ENCODE measurements at regions of chr19 and their contacts with region 1.

Region 1: GRCh38 chr19:38095411-38096308 is 128.4 kb downstream of the DPF1 start:
- DNase-seq: peak; percentile 78
- ATAC-seq: peak; percentile 72

Region 2: GRCh38 chr19:37896180-37896579 is 199.5 kb before region 1 on chr19:
- intact Hi-C with region 1: loop called (anchors 5 kb)
- DNase-seq: no peak
- ATAC-seq: peak; percentile 59

Region 3: DNA sequence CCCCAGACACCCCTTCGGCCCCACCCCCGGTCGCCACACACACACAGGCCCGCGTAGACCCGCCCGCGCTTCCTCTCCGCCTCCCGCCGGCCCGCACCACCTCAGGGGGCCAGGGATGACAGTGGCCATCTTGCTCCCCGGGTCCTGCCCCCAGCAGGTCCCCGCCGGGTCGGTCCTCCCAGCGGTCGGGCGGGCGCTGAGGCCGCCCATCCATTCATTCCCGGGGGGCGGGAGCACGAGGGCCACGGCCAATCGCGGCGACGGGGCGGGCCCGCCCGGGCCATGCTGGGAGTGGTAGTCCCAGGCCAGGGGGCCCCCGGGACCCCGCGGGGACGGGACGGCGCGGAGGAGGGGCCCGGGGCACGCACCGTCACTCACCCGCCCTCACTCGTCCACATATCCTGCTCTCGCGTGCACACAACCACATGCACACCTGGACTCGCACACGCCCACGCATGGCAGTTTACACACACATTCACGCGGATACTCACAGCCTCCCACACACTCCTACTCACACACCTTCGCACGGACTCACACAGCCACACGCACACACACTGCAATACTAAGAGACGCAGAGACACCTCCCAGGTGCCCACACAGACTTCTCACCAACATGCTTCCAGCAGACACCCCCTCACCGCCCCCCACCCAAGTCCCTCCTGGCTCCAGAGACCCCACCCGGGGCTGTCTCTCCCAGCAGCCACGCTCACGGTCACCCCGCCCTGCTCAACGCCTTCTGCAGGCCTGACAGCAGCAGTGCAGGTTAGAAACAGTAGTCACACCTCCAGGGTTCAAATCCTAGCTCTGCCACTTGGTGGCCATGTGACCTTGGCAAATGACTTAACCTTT is 128.6 kb after region 1 on chr19 and contains the start of gene DPF1:
- intact Hi-C with region 1: no loop called
- DNase-seq: no peak
- ATAC-seq: peak; percentile 75
- total RNA-seq, gene DPF1: not detected